Heart right ventricle (tissue), 16 donors: ENCODE measurements at regions of chr4 and their contacts with region 1.

Region 1: DNA sequence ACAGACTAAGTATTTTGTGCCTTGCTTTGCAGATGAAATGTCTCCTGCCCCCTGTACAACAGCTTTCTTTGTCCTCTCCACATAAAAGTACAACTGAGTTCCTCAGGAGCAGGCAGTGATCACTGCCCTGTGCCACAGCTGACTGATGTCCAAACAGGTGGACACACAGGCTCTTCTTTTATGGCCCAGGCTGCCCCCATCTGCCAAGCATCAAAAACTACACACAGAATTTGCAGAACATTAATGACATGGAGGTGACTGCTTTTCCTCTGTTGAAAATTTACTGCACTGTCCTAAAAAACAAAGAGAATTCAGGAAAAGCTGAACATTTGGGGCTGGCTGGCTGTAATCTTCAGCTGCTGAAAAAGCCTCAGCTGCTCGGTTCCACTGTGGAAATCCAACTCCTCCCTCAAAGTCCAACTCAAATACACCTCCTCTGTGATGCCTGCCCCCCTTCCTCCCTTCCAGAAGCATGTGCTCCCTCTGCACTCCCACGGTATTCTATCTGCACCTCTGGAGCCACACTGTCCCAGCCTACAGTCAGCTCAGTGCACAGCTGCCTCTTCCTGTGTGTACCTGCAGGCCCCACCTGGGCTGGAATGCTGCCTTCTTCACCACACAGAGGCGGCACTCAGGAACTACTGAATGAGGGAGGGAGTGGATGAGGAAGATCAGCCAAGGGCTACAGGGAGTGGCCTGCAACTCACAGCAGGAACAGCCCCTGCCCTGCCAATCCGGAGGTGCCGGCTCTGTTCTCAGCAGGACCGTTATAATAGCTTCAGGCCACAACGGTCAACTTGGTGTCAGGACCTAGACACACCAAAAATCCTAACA is 10.3 kb downstream of the AFAP1 start:
- DNase-seq: no peak
- ATAC-seq: peak in 5 of 8 donors; percentile 43 to 69 (median 55)
- H3K4me3 ChIP-seq: no peak overlapping the region
- H3K27ac ChIP-seq: peak overlapping the region in 1 of 10 donors; percentile 2
- H3K4me1 ChIP-seq: peaks cover 0 to 28% (median 11%) of the 10 kb centered on the region in 9 donors
- H3K27me3 ChIP-seq: no peaks in the 10 kb centered on the region
- CTCF ChIP-seq: peak in 4 of 9 donors; percentile 15 to 39 (median 30)

Region 2: GRCh38 chr4:7518871-7519637 is 410.3 kb before region 1 on chr4:
- intact Hi-C with region 1: no loop called
- DNase-seq: peak; percentile 71 to 73
- ATAC-seq: peak; percentile 66 to 90 (median 77)
- H3K4me3 ChIP-seq: no peak overlapping the region
- H3K27ac ChIP-seq: no peak overlapping the region
- H3K4me1 ChIP-seq: peaks cover 0 to 33% (median 3%) of the 10 kb centered on the region in 9 donors
- H3K27me3 ChIP-seq: peaks cover 0 to 49% (median 27%) of the 10 kb centered on the region in 7 donors
- CTCF ChIP-seq: no peak

Region 3: GRCh38 chr4:7876201-7876875 is 53.0 kb before region 1 on chr4:
- intact Hi-C with region 1: loop called in 1 of 10 experiments (anchors 5 kb)
- DNase-seq: no peak
- ATAC-seq: peak in 7 of 8 donors; percentile 35 to 58 (median 46)
- H3K4me3 ChIP-seq: peak overlapping the region in 1 of 10 donors; percentile 14
- H3K27ac ChIP-seq: peak overlapping the region in 4 of 10 donors; percentile 18 to 49 (median 21)
- H3K4me1 ChIP-seq: peaks cover 0 to 61% (median 48%) of the 10 kb centered on the region in 9 donors
- H3K27me3 ChIP-seq: no peaks in the 10 kb centered on the region
- CTCF ChIP-seq: peak in 3 of 9 donors; percentile 20 to 39 (median 25)

Region 4: GRCh38 chr4:7964890-7965662 is 35.7 kb after region 1 on chr4:
- intact Hi-C with region 1: loop called in 1 of 10 experiments (anchors 5 kb)
- DNase-seq: peak; percentile 41 to 51
- ATAC-seq: peak in 7 of 8 donors; percentile 28 to 65 (median 41)
- H3K4me3 ChIP-seq: no peak overlapping the region
- H3K27ac ChIP-seq: peak overlapping the region in 5 of 10 donors; percentile 25 to 71 (median 49)
- H3K4me1 ChIP-seq: peaks cover 17 to 56% (median 34%) of the 10 kb centered on the region in 9 donors
- H3K27me3 ChIP-seq: no peaks in the 10 kb centered on the region
- CTCF ChIP-seq: no peak